K562 (cell line): ENCODE measurements at regions of chr3 and their contacts with region 1.

Region 1: DNA sequence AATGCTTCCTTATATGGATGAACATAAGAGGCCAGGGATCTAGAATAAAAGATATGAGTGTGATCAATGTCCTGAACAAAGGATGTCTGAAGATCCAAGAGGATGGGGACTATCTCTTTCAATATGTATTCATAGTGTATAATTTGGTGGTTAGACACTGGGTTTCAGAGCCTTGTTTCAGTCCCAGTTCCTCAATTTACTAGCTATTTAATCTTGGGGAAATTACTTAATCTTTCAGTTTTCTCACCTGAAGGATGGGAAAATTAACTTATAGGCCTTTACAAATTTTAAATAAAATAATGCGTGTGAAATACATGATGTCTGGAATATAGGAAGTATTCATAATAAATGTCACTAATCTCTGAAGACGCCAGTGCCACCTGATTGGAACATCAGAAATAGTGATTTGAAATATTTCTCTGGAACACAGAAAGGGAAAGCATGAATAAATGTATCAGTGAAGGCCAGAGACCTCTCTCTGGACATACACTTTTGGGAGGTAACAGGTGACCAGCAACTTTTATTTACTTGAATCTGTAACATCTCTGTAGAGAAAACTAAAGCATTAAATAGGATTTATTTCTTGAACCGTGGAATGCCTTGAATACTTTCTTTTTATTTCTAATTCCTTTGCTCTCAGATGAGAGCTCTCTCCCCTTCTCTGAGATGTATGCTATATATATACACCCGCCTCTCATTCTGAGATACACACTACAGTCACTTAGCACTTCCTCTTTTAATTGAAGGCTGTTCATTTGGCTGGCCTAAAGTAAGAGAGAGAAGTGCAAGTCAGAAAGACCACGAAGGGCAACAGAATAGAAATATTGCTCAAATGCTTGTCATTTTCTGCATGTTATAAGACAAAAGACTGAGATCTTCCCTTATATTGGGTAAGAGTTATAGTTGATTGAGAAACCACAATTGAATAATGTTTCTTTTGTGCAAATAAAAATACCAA is 407.1 kb downstream of the LSAMP start:
- DNase-seq: peak in 1 of 4 experiments; percentile 50
- ATAC-seq: peak; percentile 74
- H3K4me3 ChIP-seq: no peak overlapping the region
- H3K27ac ChIP-seq: peak overlapping the region; percentile 83
- H3K4me1 ChIP-seq: peaks cover 2 to 34% of the 10 kb centered on the region in 2 experiments; a peak in 2 of 5 replicates
- H3K27me3 ChIP-seq: no peaks in the 10 kb centered on the region
- CTCF ChIP-seq: no peak
- EP300 ChIP-seq: no peak
- POLR2A ChIP-seq: no peak
- RAD21 ChIP-seq: no peak

Region 2: GRCh38 chr3:115986555-115987207 is 51.6 kb before region 1 on chr3:
- CTCF ChIA-PET with region 1: no interaction called
- POLR2A ChIA-PET with region 1: no interaction called
- in situ Hi-C with region 1: no loop called
- intact Hi-C with region 1: loop called (anchors 2 kb)
- DNase-seq: peak; percentile 52 to 66 (median 58)
- ATAC-seq: peak; percentile 90
- H3K4me3 ChIP-seq: no peak overlapping the region
- H3K27ac ChIP-seq: no peak overlapping the region
- H3K4me1 ChIP-seq: no peaks in the 10 kb centered on the region; a peak in 1 of 5 replicates
- H3K27me3 ChIP-seq: no peaks in the 10 kb centered on the region
- CTCF ChIP-seq: peak; percentile 57 to 78 (median 77)
- EP300 ChIP-seq: no peak
- POLR2A ChIP-seq: no peak
- RAD21 ChIP-seq: peak; percentile 40 to 75